ENCODE measurements at regions of chr12 and their contacts with region 1.

Region 1: DNA sequence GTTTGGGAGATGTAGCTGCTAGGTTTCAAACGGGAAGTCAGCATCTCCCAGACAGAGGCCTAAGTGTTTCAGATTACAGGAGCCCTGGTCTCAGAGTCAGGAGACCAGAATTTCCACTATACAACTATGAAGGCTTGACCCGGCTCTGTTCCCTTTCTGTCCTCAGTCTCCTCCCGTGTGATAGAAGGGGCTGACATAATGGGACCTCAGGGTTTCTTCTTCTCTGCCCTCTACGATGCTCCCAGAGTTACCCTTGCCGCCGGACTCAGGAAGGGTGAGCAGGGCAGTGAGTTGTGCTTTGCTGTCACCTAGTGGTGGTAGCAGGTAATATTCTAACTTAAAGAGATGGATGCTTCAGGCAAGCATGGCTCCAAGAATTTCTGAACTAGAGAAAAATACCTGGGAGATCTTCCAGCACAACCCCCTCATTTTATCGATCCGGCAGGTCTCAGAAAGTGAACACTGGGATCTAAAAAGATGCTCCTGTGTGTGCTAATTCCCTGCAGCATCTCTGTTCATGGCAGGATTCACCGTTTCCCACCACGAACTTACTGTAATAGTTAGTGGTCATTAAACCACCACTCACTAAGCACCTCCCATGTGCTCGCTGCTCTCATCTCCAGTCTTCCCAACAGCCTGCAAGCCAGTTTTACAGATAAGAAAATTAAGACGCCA is 84.4 kb downstream of the VWF start:
- DNase-seq: peak; percentile 60
- ATAC-seq: peak; percentile 72
- H3K4me3 Mint-ChIP-seq: no peak overlapping the region
- H3K27ac Mint-ChIP-seq: no peak overlapping the region
- H3K4me1 Mint-ChIP-seq: peaks cover 17% of the 10 kb centered on the region
- H3K27me3 Mint-ChIP-seq: peaks cover 11% of the 10 kb centered on the region
- CTCF ChIP-seq: peak; percentile 79

Region 2: GRCh38 chr12:5898876-5899275 is 141.2 kb before region 1 on chr12:
- CTCF ChIA-PET with region 1: interaction called, 18 read pairs
- POLR2A ChIA-PET with region 1: no interaction called
- DNase-seq: peak; percentile 47
- ATAC-seq: peak; percentile 80
- H3K4me3 Mint-ChIP-seq: no peak overlapping the region
- H3K27ac Mint-ChIP-seq: no peak overlapping the region
- H3K4me1 Mint-ChIP-seq: peaks cover 12% of the 10 kb centered on the region
- H3K27me3 Mint-ChIP-seq: peaks cover 2% of the 10 kb centered on the region; the same call in 1 of the 2 replicates
- CTCF ChIP-seq: no peak

Region 3: DNA sequence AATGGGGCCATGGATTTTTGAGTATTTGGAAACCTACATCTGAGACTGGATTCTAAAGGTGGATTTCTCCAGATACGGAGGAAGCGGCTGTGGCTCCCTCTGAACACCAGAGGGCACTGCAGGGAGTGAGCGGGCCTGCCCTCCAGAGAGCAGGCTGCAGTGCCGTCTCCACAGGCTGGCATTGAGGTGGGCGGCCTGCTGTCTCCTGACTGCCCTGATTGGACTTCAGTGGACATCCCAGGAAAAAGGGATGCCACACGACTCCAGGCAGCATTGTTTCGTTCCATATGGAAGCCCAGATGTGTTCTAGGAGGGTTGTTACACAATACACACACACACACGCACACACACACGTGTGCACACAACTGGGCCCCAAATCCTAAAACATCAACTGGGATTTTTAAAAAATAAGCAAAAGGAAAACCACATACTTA is 74.1 kb before region 1 on chr12:
- CTCF ChIA-PET with region 1: interaction called, 42 read pairs
- POLR2A ChIA-PET with region 1: no interaction called
- DNase-seq: peak; percentile 74
- ATAC-seq: peak; percentile 79
- H3K4me3 Mint-ChIP-seq: no peak overlapping the region
- H3K27ac Mint-ChIP-seq: no peak overlapping the region
- H3K4me1 Mint-ChIP-seq: peaks cover 38% of the 10 kb centered on the region
- H3K27me3 Mint-ChIP-seq: peaks cover 5% of the 10 kb centered on the region; the same call in 1 of the 2 replicates
- CTCF ChIP-seq: peak; percentile 55

Region 4: DNA sequence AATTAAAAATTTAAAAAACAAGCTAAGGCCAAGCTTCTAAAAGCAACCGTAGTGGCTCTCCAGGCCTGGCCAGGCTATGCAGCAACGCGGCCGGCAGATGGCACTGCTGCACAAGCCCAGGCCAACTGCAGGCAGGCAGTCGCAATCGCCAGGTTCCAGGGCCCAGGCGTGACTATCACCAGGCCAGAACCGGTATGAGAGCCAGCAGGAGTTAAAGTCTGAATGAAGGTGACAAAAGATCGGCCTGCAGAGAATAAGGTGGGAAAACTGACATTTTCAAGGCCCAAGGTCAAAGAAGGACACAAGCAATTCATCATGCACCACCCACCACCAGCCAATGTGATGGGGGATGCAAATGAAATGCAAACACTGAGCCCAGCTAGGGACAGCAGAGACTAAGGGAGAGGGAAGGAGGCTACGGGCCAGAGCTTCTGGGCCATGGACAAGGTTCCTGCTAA is 51.3 kb before region 1 on chr12:
- CTCF ChIA-PET with region 1: interaction called, 566 read pairs
- POLR2A ChIA-PET with region 1: interaction called, 6 read pairs
- DNase-seq: peak; percentile 92
- ATAC-seq: peak; percentile 97
- H3K4me3 Mint-ChIP-seq: no peak overlapping the region
- H3K27ac Mint-ChIP-seq: peak overlapping the region; percentile 95; the same call in 1 of the 2 replicates
- H3K4me1 Mint-ChIP-seq: peaks cover 30% of the 10 kb centered on the region
- H3K27me3 Mint-ChIP-seq: no peaks in the 10 kb centered on the region; the same call in 1 of the 2 replicates
- CTCF ChIP-seq: peak; percentile 83

Region 5: DNA sequence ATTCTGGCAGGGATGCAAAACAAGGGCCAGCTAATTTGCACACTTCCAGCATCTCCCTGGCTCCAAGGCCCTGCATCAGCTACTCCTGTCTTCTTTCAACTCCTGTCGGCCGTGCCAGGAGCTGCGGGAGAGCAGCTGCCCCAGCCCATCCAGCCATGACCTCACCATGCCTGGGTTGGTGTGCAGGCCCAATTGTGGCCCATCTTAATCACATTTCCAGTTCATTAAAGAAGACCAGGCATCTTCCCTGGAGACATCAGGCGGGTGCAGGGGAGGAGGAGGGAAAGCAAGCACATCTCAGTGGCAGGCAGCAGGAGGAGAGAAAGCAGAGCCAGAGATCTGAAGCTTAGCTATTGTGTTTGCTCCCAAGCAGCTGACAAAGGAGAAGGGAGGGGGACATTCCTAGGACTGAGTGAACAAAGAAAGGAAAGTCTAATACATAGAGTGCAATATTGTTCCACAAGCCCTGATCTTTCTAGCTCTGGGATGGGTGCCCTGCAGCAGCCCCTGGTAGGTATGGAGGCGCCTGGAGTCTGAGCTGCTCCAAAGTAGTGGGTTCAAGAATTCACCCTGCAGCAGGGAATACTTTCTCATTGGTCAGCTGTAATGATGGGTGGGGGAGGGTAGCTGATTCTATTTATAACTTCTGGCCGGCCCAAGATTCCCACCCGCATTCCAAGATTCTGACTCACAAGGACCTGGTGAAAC is 44.4 kb after region 1 on chr12:
- CTCF ChIA-PET with region 1: interaction called, 10 read pairs
- POLR2A ChIA-PET with region 1: no interaction called
- DNase-seq: no peak
- ATAC-seq: peak; percentile 71
- H3K4me3 Mint-ChIP-seq: peak overlapping the region; percentile 22; the same call in 1 of the 2 replicates
- H3K27ac Mint-ChIP-seq: peak overlapping the region; percentile 51
- H3K4me1 Mint-ChIP-seq: peaks cover 42% of the 10 kb centered on the region
- H3K27me3 Mint-ChIP-seq: peaks cover 6% of the 10 kb centered on the region
- CTCF ChIP-seq: no peak

Region 6: GRCh38 chr12:6295094-6295811 is 255.2 kb after region 1 on chr12:
- CTCF ChIA-PET with region 1: no interaction called
- POLR2A ChIA-PET with region 1: no interaction called
- DNase-seq: no peak
- ATAC-seq: no peak
- H3K4me3 Mint-ChIP-seq: no peak overlapping the region
- H3K27ac Mint-ChIP-seq: no peak overlapping the region
- H3K4me1 Mint-ChIP-seq: peaks cover 19% of the 10 kb centered on the region
- H3K27me3 Mint-ChIP-seq: peaks cover 4% of the 10 kb centered on the region; the same call in 1 of the 2 replicates
- CTCF ChIP-seq: no peak